ENCODE measurements at regions of chr5 and their contacts with region 1.

Region 1: GRCh38 chr5:160219356-160219755 is 9.9 kb upstream of the FABP6 start:
- DNase-seq: no peak
- H3K4me3 ChIP-seq: no peak overlapping the region
- CTCF ChIP-seq: no peak

Region 2: GRCh38 chr5:160312134-160312959 is 93.0 kb after region 1 on chr5 and contains the start of gene CCNJL:
- in situ Hi-C with region 1: no loop called
- DNase-seq: no peak
- H3K4me3 ChIP-seq: peak within 1 kb of the TSS; percentile 73
- CTCF ChIP-seq: no peak

Region 3: DNA sequence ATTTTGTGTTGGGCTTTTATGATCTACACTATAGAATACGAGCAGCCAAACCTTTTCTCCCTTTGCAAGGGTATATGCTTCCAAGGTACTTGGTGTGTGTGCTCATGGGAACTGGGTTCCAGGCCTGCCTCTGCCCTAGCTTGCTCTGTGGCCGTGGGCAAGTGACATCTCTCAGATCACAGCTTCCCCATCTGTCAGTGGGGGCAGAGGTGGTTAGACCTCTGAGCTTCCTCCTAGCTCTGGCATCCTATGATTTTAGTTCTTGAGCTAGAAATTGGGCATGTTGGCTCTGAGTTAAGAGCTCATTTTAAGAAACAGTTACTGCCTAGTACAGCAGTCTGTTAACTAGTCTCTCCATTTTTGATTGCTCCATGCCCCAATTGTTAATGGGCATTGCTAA is 105.5 kb after region 1 on chr5:
- in situ Hi-C with region 1: loop called (anchors 5 kb)
- DNase-seq: no peak
- H3K4me3 ChIP-seq: no peak overlapping the region
- CTCF ChIP-seq: no peak